ENCODE measurements at regions of chr20 and their contacts with region 1.

Region 1: DNA sequence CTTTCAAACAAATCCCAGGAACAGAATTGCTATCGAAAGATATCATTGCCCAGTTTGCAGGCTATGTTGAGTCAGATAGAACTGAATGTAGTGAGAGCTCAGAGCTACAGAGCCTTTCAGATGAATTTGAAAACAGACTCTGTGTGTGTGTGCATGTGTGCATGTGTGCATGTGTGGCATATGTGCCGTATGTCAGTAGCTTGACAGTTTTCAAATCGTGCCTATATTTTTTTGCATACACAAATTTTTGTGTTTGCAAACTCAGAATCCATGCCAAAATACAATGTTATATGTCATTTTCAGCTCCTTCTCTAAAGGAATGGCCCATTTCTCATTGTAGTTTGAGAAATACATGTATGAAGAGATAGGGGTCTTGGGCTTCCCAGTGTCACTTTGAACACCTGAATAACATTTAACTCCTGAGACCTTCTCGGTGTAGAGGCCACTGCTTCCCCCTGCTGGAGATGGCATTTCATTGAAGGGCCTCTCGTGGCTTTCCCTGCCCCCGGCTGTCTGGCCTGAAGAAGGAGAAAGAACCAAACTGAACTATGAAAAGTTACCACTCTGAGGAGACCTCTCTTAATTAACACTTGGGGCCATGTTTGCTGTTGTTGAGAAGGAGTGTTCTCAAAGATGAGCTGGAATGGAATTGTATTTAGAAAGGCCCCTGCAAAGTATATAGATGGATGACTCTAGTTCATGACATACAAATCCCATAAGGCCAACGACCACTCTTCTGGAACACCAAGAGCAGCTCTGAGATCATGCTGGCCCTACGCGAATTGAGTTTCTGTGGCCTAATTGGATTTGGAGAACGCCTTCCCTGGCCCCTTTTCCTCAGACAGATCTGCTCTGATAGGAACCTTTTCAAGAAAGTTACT is 58.7 kb downstream of the VAPB start:
- DNase-seq: peak in 1 of 5 donors; percentile 42
- ATAC-seq: peak in 3 of 4 donors; percentile 53 to 78 (median 71)
- H3K4me3 ChIP-seq: no peak overlapping the region
- H3K27ac ChIP-seq: no peak overlapping the region
- H3K4me1 ChIP-seq: peaks cover 0 to 8% (median 0%) of the 10 kb centered on the region in 12 donors
- H3K27me3 ChIP-seq: no peaks in the 10 kb centered on the region
- CTCF ChIP-seq: peak; percentile 46 to 65 (median 54)
- POLR2A ChIP-seq: no peak

Region 2: GRCh38 chr20:58293453-58293852 is 154.3 kb before region 1 on chr20:
- intact Hi-C with region 1: no loop called
- DNase-seq: peak in 3 of 5 donors; percentile 22 to 46 (median 41)
- ATAC-seq: peak in 3 of 4 donors; percentile 80 to 89 (median 86)
- H3K4me3 ChIP-seq: no peak overlapping the region
- H3K27ac ChIP-seq: no peak overlapping the region
- H3K4me1 ChIP-seq: peaks cover 0 to 4% (median 0%) of the 10 kb centered on the region in 12 donors
- H3K27me3 ChIP-seq: no peaks in the 10 kb centered on the region
- CTCF ChIP-seq: no peak
- POLR2A ChIP-seq: no peak

Region 3: DNA sequence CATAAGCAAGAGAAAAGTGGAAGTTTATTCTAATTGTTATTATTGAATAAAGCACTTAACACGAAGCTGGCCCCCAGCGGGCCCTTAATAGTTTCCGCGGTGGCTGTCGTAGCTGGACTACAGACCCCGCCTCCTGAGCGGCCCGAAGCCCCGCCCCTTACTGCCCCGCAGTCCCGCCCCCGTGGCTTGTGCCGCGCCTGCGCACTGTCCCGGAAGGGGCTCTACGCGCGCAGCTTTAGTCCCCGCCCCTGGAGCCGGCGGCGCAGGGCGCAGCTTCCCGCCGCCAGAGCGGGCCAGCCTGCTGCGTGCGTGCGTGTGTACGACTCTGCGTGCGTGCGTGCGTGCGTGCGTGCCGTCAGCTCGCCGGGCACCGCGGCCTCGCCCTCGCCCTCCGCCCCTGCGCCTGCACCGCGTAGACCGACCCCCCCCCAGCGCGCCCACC is 58.8 kb before region 1 on chr20 and contains the start of gene VAPB:
- intact Hi-C with region 1: loop called in 1 of 10 experiments (anchors 10 kb)
- DNase-seq: peak; percentile 94 to 99 (median 96)
- ATAC-seq: peak; percentile 99 to 100 (median 99)
- H3K4me3 ChIP-seq: peak within 1 kb of the TSS; percentile 69 to 91 (median 86)
- H3K27ac ChIP-seq: peak within 1 kb of the TSS; percentile 80 to 97 (median 94)
- H3K4me1 ChIP-seq: peaks cover 0 to 46% (median 29%) of the 10 kb centered on the region in 12 donors
- H3K27me3 ChIP-seq: no peaks in the 10 kb centered on the region
- CTCF ChIP-seq: no peak
- POLR2A ChIP-seq: peak in 1 of 2 donors; percentile 85
- total RNA-seq, gene VAPB: 30.7 to 76.1 (median 63.8) TPM